ENCODE measurements at regions of chr11 and their contacts with region 1.

Region 1: GRCh38 chr11:45365961-45366618 is 79.9 kb upstream of the SYT13 start:
- DNase-seq: no peak
- H3K4me3 ChIP-seq: no peak overlapping the region
- H3K27ac ChIP-seq: no peak overlapping the region
- H3K4me1 ChIP-seq: no peaks in the 10 kb centered on the region
- H3K27me3 ChIP-seq: peaks cover 72% of the 10 kb centered on the region

Region 2: DNA sequence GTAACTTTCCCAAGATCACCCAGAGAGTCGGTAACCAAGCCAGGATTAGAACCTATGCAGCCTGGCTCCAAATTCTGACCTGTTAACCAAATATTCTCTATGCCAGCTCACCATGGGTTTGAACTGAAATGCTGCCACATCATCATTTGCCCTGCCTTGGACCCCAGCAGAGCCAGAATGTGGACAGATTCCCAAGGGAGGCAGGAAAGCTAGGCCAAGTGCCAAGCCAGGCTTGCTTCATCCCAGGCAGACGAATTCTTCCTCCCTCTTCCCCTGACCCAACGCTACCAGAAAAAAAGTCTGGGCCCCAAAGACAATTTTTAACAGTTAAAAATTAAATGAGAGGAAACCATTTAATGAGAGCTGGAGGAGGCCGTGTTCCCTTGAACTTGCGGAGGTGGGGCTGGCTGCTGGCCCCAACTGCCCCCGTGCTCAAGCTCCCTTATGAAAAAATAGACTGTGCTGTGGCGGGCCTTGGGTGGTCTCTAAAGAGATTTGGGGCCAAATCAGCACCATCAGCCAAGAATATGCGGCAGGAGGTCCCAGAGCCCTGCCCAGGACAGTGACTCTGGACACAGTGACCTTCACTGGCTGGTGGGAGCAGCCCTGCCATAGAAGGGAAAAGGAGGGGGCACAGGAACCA is 104.2 kb after region 1 on chr11:
- in situ Hi-C with region 1: no loop called
- DNase-seq: peak; percentile 24
- H3K4me3 ChIP-seq: no peak overlapping the region
- H3K27ac ChIP-seq: no peak overlapping the region
- H3K4me1 ChIP-seq: no peaks in the 10 kb centered on the region
- H3K27me3 ChIP-seq: peaks cover 7% of the 10 kb centered on the region; the same call in 1 of the 2 replicates

Region 3: GRCh38 chr11:45765836-45766235 is 399.7 kb after region 1 on chr11:
- in situ Hi-C with region 1: loop called (anchors 10 kb)
- DNase-seq: no peak
- H3K4me3 ChIP-seq: no peak overlapping the region
- H3K27ac ChIP-seq: no peak overlapping the region
- H3K4me1 ChIP-seq: no peaks in the 10 kb centered on the region
- H3K27me3 ChIP-seq: peaks cover 60% of the 10 kb centered on the region